ENCODE measurements at regions of chr17 and their contacts with region 1.

Region 1: DNA sequence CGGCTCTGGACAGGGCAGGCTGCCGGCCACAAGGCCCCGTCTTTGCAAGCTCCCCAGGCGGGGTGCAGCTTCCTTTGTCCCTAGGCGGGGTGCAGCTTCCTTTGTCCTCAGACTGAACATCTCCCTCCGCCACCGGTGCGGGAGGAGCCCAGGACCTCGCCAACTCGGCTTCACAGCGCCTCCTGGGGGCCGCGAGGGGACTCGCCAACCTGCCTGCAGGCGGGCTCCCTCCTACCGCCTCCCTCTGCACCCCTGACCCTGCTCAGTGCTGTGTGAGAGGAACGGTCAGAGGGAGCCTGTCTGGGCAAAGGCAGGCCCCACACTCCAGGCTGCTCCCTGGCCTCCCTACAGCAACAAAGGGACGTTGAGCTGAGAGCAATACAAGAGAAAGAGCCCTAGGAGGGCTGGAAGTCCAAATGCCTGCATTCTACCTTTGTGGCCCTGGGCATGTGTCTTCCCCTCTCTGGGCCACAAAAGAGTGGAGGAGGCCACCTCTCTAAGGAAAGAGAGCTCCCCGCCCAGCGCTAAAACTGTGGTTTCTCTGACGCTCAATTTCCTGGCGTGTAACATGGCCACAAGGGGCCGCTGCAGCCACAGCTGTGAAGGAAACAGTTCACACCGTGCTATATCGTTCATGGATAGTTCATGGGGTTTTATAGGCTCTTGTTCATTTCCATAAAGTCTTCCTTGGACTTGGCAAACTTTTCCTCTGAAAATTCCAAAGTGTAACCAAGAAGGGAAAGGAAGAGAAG is 20.9 kb upstream of the KRT19 start:
- DNase-seq: peak; percentile 91
- H3K4me3 ChIP-seq: peak overlapping the region in 1 of 3 experiments; percentile 23
- H3K27ac ChIP-seq: peak overlapping the region; percentile 85
- H3K4me1 ChIP-seq: peaks cover 52% of the 10 kb centered on the region
- H3K27me3 ChIP-seq: no peaks in the 10 kb centered on the region
- CTCF ChIP-seq: peak; percentile 91 to 96

Region 2: GRCh38 chr17:40516581-40517285 is 1032.3 kb before region 1 on chr17:
- CTCF ChIA-PET with region 1: no interaction called
- dilution Hi-C with region 1: no loop called
- in situ Hi-C with region 1: no loop called
- intact Hi-C with region 1: no loop called
- DNase-seq: peak; percentile 71
- H3K4me3 ChIP-seq: no peak overlapping the region
- H3K27ac ChIP-seq: peak overlapping the region; percentile 92
- H3K4me1 ChIP-seq: peaks cover 60% of the 10 kb centered on the region
- H3K27me3 ChIP-seq: no peaks in the 10 kb centered on the region
- CTCF ChIP-seq: no peak

Region 3: GRCh38 chr17:40803617-40804082 is 745.4 kb before region 1 on chr17:
- CTCF ChIA-PET with region 1: no interaction called
- dilution Hi-C with region 1: no loop called
- in situ Hi-C with region 1: loop called in 1 of 2 experiments (anchors 10 kb)
- intact Hi-C with region 1: loop called (anchors 1 kb)
- DNase-seq: peak; percentile 65
- H3K4me3 ChIP-seq: no peak overlapping the region
- H3K27ac ChIP-seq: no peak overlapping the region
- H3K4me1 ChIP-seq: peaks cover 4% of the 10 kb centered on the region
- H3K27me3 ChIP-seq: no peaks in the 10 kb centered on the region
- CTCF ChIP-seq: peak; percentile 89 to 93

Region 4: GRCh38 chr17:41322094-41322902 is 226.7 kb before region 1 on chr17:
- CTCF ChIA-PET with region 1: no interaction called
- dilution Hi-C with region 1: no loop called
- in situ Hi-C with region 1: no loop called
- intact Hi-C with region 1: loop called (anchors 1 kb)
- DNase-seq: peak; percentile 61
- H3K4me3 ChIP-seq: no peak overlapping the region
- H3K27ac ChIP-seq: peak overlapping the region; percentile 39
- H3K4me1 ChIP-seq: peaks cover 3% of the 10 kb centered on the region
- H3K27me3 ChIP-seq: no peaks in the 10 kb centered on the region
- CTCF ChIP-seq: peak; percentile 95 to 98

Region 5: DNA sequence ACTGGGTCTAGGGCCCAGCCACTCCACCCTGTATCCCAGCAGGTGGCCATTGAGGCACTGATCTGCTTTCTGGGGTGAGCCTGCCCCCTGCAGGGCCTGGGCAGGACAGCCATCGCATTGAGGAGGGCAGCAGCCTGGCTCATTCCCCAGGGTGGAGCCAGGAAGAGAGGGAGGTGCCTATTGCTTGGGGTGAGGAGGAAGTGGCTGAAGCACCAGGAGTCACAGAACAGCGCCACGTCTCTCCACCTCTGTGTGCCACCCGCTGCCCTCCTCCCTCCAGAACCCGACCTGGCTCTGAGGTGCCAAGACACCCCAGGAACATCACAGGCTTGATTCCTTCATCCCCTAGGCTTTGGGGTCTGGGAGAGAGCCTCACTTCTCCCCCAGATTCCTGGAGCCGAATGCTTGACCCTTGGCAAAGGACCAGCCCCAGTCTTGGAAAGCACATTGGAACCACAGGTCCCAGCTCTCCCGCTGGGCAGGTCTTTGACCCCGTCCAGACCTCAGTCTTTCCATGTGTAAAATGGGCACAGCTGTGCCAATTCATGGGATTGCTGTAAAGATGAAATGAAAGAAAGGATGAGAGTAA is 52.1 kb before region 1 on chr17:
- CTCF ChIA-PET with region 1: interaction called, 3 read pairs
- dilution Hi-C with region 1: loop called (anchors 5 kb)
- in situ Hi-C with region 1: no loop called
- intact Hi-C with region 1: loop called (anchors 1 kb)
- DNase-seq: peak; percentile 88
- H3K4me3 ChIP-seq: no peak overlapping the region
- H3K27ac ChIP-seq: peak overlapping the region; percentile 52
- H3K4me1 ChIP-seq: peaks cover 49% of the 10 kb centered on the region
- H3K27me3 ChIP-seq: no peaks in the 10 kb centered on the region
- CTCF ChIP-seq: peak; percentile 97

Region 6: GRCh38 chr17:41624208-41625101 is 75.4 kb after region 1 on chr17 and contains the start of gene KRT17:
- CTCF ChIA-PET with region 1: interaction called, 4 read pairs
- dilution Hi-C with region 1: no loop called
- in situ Hi-C with region 1: no loop called
- intact Hi-C with region 1: loop called (anchors 2 kb)
- DNase-seq: peak; percentile 99
- H3K4me3 ChIP-seq: peak within 1 kb of the TSS; percentile 57 to 86 (median 70)
- H3K27ac ChIP-seq: peak within 1 kb of the TSS; percentile 98
- H3K4me1 ChIP-seq: peaks cover 63% of the 10 kb centered on the region
- H3K27me3 ChIP-seq: no peaks in the 10 kb centered on the region
- CTCF ChIP-seq: peak in 1 of 2 donors; percentile 19
- total RNA-seq, gene KRT17: 10,365 to 24,723 TPM

Region 7: GRCh38 chr17:41665566-41666236 is 116.7 kb after region 1 on chr17:
- CTCF ChIA-PET with region 1: interaction called, 15 read pairs
- dilution Hi-C with region 1: no loop called
- in situ Hi-C with region 1: loop called in 1 of 2 experiments (anchors 10 kb)
- intact Hi-C with region 1: loop called (anchors 1 kb)
- DNase-seq: peak; percentile 83
- H3K4me3 ChIP-seq: peak overlapping the region in 2 of 3 experiments; percentile 34 to 37
- H3K27ac ChIP-seq: peak overlapping the region; percentile 68
- H3K4me1 ChIP-seq: peaks cover 47% of the 10 kb centered on the region
- H3K27me3 ChIP-seq: no peaks in the 10 kb centered on the region
- CTCF ChIP-seq: peak; percentile 87 to 92

Region 8: DNA sequence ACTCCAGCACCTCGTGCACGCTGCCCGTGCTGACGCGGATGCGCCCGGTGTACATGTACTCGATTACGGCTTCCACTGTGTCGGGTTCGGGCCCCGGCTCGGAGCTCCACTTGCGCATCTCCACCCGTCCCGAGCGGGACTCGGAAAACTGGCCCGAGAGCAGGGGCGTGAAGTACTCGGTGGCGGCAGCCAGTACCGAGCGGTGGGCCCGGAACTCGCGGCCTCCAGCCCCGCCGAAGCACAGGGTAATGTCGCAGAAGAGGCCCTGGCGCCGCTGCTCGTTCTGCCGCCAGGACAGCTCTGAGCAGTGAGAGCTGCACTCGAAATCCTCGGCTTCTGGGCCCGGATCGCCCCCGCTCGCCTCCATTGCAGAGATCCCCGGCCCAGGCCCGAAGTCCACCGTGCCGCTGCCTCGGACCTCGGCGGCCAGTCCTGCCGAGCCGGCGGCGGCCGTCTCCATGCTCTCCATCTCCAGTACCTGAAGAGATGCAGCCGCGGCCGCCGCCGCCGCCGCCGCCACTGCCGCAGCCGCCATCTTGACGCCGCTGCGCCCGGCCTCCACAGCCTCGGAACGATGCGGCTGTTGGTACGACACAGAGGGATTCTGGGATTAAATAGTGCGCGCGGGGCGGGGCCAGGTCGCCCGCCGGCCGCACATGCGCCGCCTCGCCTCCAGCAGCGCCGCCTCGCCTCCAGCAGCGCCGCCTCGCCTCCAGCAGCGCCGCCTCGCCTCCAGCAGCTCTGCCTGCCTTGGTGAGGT is 316.0 kb after region 1 on chr17 and contains the start of gene KLHL11:
- CTCF ChIA-PET with region 1: no interaction called
- dilution Hi-C with region 1: no loop called
- in situ Hi-C with region 1: no loop called
- intact Hi-C with region 1: no loop called
- DNase-seq: peak; percentile 89
- H3K4me3 ChIP-seq: peak within 1 kb of the TSS; percentile 68 to 96 (median 75)
- H3K27ac ChIP-seq: peak within 1 kb of the TSS; percentile 50
- H3K4me1 ChIP-seq: peaks cover 7% of the 10 kb centered on the region
- H3K27me3 ChIP-seq: no peaks in the 10 kb centered on the region
- CTCF ChIP-seq: peak in 1 of 2 donors; percentile 4
- total RNA-seq, gene KLHL11: 14.5 to 43.2 TPM

Region 9: DNA sequence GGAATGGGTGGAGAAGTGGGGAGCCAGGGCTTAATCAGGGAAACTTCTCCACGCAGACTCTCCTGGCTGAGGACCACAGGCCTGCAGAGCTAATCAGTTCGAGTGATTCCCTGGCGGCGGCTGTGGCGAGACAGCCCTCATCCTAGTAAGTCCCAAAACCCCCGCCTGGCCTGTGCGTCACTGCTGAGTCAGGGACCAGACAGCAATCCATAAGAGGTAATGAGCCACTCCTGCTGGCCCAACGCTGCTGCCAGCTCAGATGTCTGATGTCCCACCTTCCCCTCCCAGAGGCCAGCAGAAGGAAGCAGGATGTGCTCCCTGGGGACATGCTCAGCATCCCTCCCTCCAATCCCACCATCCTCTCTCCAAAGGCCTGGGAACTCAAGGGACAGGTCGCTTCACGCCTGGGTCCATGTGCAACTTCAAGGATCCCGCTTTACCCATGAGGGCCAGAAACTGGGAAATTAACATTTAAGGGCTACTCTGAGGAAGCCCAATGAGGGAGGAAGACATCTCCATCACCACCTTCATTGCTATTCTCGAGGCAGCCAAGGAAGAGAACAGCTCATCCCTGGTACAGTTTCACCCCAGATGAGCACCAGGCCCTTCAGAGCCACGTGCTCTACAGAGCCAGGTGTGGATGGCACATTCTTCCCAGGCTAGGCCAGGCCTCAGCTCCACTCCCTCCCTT is 361.8 kb after region 1 on chr17:
- CTCF ChIA-PET with region 1: no interaction called
- dilution Hi-C with region 1: no loop called
- in situ Hi-C with region 1: no loop called
- intact Hi-C with region 1: no loop called
- DNase-seq: peak; percentile 19
- H3K4me3 ChIP-seq: no peak overlapping the region
- H3K27ac ChIP-seq: no peak overlapping the region
- H3K4me1 ChIP-seq: peaks cover 15% of the 10 kb centered on the region
- H3K27me3 ChIP-seq: no peaks in the 10 kb centered on the region
- CTCF ChIP-seq: no peak